Posterior cingulate gyrus (tissue), 11 donors: ENCODE measurements at regions of chr3 and their contacts with region 1.

Region 1: GRCh38 chr3:170221924-170222646 is at the start of gene PRKCI:
- DNase-seq: peak; percentile 88 to 99 (median 94)

Region 2: DNA sequence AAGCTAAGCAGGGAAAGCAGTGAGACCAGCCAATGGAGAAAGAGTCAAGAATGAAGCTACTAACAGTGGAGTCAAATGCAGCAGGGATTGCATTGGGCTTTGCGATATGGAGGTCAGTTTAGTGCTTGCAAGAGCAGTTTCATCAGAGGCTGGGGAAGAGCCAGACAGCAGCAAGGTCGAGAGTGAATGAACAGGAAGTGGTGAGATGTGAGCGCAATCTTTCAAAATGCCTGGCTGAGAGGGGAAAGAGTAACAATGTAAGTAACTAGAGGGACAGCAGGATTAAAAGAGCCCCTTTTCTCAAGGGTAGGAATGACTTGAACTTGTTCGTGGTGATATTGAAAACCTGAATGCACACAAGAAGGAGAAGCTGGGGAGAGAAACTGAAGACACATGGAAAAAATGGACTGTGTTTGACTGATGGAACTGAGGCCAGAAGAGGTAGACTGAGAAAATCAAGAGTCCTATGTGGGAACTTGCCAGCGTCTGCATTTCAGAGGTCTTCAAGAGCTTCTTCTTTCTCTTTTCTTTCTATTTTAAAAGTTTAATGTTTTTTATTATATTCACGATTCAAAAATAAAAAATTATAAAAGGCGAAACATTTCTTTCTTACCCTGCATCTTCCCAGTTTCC is 214.9 kb before region 1 on chr3:
- intact Hi-C with region 1: no loop called
- DNase-seq: no peak

Region 3: DNA sequence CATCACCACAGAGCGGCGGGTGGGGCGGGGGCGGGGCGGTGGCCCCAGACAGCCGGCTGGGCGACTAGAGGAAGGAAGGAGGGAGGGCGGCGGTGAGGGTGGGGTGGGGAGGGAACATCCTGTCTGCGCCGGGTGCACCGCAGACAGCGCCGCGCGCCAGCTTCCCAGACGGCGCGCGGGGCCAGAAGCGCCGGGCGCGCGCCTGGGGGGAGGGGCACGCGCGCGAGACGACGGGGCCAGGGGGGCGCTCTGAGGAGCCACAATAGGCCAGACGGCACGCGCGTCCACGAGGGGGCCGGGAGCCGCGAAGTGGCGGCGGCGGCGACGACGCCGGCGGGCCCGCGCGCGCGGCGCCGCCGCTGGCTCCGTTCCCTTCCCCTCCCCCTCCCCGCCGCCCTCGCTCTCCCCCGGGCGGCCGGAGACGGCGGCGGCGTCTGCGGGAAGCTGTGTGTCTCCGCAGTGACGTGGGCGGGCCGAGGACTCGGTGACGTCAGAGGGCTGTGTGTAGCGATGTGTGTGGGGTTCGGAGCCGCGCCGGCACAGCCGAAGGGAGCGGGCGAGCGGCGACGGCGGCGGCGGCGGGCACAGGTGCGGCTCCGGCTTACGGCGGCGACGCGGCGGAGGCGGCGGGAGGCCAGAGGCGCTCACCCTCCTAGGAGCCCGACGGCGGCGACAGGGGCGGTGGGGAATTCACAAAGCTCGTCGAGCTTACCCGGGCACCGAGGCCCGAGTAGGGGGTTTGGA is 135.3 kb after region 1 on chr3 and contains the start of gene SKIL:
- intact Hi-C with region 1: loop called (anchors 5 kb)
- DNase-seq: peak; percentile 91 to 99 (median 94)